GM12878 (cell line): ENCODE measurements at regions of chr10 and their contacts with region 1.

Region 1: DNA sequence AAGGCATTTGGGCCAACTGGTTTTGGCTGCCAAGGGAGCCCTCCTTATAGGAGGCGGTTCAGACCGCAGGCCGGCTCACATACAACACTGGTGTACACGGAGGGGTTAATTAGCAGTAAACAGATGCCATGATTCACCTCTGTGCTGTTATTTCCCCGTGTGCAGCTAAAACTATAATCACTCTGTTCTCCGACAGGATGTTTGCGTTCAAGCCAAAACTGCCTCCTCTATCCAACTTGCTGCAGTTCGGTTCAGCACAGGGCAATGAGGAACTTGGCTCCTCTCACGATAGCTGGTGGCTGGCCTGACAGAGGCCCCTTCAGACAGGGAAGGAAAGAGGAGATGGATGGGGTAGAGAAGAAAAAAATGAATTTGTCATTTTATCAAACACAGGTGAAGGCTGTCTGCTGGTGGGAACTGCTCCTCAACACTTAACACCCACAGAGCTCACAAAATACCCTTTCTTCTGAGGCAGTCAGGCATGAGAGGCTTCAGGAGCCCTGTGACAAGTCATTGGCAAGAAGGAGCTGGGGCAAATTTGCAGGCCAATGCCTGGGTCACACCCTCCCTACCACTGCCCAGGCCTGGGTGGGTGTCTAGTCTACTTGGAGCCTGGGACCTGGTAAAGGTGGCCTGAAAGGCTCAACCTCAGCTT is 24.0 kb downstream of the KCNMA1 start:
- DNase-seq: no peak
- ATAC-seq: peak; percentile 83
- H3K4me3 ChIP-seq: no peak overlapping the region
- H3K27ac ChIP-seq: no peak overlapping the region
- H3K4me1 ChIP-seq: peaks cover 3% of the 10 kb centered on the region; the same call in 1 of the 2 replicates
- H3K27me3 ChIP-seq: no peaks in the 10 kb centered on the region; a peak in 1 of 4 replicates
- CTCF ChIP-seq: no peak
- EP300 ChIP-seq: peak; percentile 46 to 48; a peak in 3 of 4 replicates
- POLR2A ChIP-seq: no peak
- RAD21 ChIP-seq: no peak

Region 2: DNA sequence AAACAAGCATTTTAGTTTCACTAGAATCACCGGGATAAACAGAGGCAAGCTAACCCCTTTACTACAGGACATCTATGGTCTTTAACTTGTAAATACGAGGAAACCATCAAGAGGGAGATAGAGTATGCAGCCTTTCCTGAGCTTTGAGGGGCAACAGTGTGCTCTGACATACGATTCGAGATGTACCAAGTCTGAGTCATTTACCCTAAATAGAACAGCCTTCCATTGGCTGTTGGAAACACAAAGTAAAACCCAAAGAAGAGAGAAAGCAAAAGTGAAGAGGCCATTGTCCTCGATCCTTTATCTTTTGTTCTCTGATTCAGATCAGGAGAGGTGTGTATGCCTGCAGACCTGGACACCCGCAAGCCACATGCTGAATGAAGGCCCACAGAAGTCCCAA is 265.5 kb before region 1 on chr10:
- CTCF ChIA-PET with region 1: no interaction called
- POLR2A ChIA-PET with region 1: no interaction called
- RAD21 ChIA-PET with region 1: no interaction called
- SMC1A ChIA-PET with region 1: no interaction called
- in situ Hi-C with region 1: no loop called
- intact Hi-C with region 1: no loop called
- DNase-seq: no peak
- ATAC-seq: peak; percentile 83
- H3K4me3 ChIP-seq: no peak overlapping the region
- H3K27ac ChIP-seq: no peak overlapping the region
- H3K4me1 ChIP-seq: no peaks in the 10 kb centered on the region
- H3K27me3 ChIP-seq: no peaks in the 10 kb centered on the region
- CTCF ChIP-seq: no peak
- EP300 ChIP-seq: no peak
- POLR2A ChIP-seq: no peak
- RAD21 ChIP-seq: no peak

Region 3: GRCh38 chr10:77422491-77423338 is 190.9 kb before region 1 on chr10:
- CTCF ChIA-PET with region 1: no interaction called
- POLR2A ChIA-PET with region 1: no interaction called
- RAD21 ChIA-PET with region 1: no interaction called
- SMC1A ChIA-PET with region 1: no interaction called
- in situ Hi-C with region 1: no loop called
- intact Hi-C with region 1: no loop called
- DNase-seq: no peak
- ATAC-seq: no peak
- H3K4me3 ChIP-seq: no peak overlapping the region
- H3K27ac ChIP-seq: no peak overlapping the region
- H3K4me1 ChIP-seq: no peaks in the 10 kb centered on the region
- H3K27me3 ChIP-seq: no peaks in the 10 kb centered on the region
- CTCF ChIP-seq: no peak
- EP300 ChIP-seq: no peak
- POLR2A ChIP-seq: no peak
- RAD21 ChIP-seq: no peak

Region 4: GRCh38 chr10:77603534-77603927 is 10.1 kb before region 1 on chr10:
- CTCF ChIA-PET with region 1: interaction called, 15 read pairs
- POLR2A ChIA-PET with region 1: interaction called, 8 read pairs
- RAD21 ChIA-PET with region 1: interaction called, 16 read pairs
- SMC1A ChIA-PET with region 1: interaction called, 27 read pairs
- in situ Hi-C with region 1: no loop called
- intact Hi-C with region 1: no loop called
- DNase-seq: no peak
- ATAC-seq: peak; percentile 88
- H3K4me3 ChIP-seq: no peak overlapping the region
- H3K27ac ChIP-seq: no peak overlapping the region
- H3K4me1 ChIP-seq: peaks cover 11% of the 10 kb centered on the region
- H3K27me3 ChIP-seq: no peaks in the 10 kb centered on the region
- CTCF ChIP-seq: no peak
- EP300 ChIP-seq: no peak
- POLR2A ChIP-seq: no peak
- RAD21 ChIP-seq: no peak

Region 5: GRCh38 chr10:77628906-77629730 is 15.5 kb after region 1 on chr10:
- CTCF ChIA-PET with region 1: interaction called, 19 read pairs
- POLR2A ChIA-PET with region 1: interaction called, 15 read pairs
- RAD21 ChIA-PET with region 1: interaction called, 37 read pairs
- SMC1A ChIA-PET with region 1: interaction called, 27 read pairs
- in situ Hi-C with region 1: no loop called
- intact Hi-C with region 1: no loop called
- DNase-seq: no peak
- ATAC-seq: no peak
- H3K4me3 ChIP-seq: no peak overlapping the region
- H3K27ac ChIP-seq: no peak overlapping the region
- H3K4me1 ChIP-seq: no peaks in the 10 kb centered on the region
- H3K27me3 ChIP-seq: no peaks in the 10 kb centered on the region
- CTCF ChIP-seq: no peak
- EP300 ChIP-seq: no peak
- POLR2A ChIP-seq: no peak
- RAD21 ChIP-seq: no peak